Breast epithelium (tissue), 4 donors: ENCODE measurements at regions of chr20 and their contacts with region 1.

Region 1: GRCh38 chr20:60069656-60070055 is 111.4 kb downstream of the CDH26 start:
- DNase-seq: no peak
- H3K4me3 ChIP-seq: no peak overlapping the region
- H3K27ac ChIP-seq: no peak overlapping the region
- H3K4me1 ChIP-seq: no peaks in the 10 kb centered on the region
- H3K27me3 ChIP-seq: no peaks in the 10 kb centered on the region
- CTCF ChIP-seq: no peak
- POLR2A ChIP-seq: no peak

Region 2: DNA sequence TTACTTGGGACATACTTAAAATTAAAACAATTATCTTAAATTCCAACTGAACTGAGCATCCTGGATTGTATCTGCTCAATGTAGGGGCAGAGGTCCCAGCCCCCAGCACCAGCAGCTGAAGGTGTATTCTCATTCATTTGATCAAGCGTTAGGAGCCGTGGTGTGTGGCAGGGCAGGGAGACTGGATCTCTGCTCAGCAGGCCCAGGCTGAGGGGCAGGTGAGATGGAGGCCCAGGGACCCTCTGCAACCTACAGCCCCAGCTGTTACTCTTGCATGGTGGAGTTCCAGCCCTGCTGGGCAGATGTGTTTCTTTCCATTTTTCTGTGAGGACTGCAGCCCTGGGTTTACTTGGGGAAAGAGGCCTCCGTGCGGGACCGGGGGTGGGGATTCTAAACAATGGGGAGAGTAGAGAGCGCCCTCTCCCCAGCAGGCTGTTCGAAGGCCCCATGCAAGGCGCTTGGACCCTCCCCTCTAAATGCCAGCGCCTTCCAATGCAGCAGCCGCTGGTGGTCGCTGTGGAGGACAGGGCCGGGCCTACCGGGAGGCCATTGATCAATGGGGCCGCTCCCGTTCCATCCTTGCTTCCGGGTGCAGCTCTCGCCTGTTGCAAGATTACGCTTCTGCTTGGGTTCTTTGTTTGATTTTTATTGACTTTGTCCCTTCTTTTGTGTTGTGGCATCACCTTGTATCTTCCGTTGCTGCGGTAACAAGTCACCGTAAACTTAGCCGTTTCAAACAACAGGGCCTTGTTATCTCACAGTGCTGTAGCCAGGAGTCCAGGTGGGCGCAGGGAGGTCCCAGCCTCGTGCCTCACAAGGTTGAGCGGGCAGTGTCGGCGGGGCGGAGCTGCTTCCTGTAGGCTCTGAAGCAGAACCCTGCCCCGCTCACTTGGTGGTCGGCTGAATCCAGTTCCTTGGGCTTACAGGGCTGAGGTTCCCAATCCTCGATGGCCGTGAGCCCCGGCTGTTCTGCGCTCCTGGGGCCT is 600.1 kb before region 1 on chr20:
- intact Hi-C with region 1: loop called (anchors 5 kb)
- DNase-seq: no peak
- H3K4me3 ChIP-seq: no peak overlapping the region
- H3K27ac ChIP-seq: no peak overlapping the region
- H3K4me1 ChIP-seq: no peaks in the 10 kb centered on the region
- H3K27me3 ChIP-seq: no peaks in the 10 kb centered on the region
- CTCF ChIP-seq: no peak
- POLR2A ChIP-seq: no peak